Activated naive CD4-positive, alpha-beta T cell treated with anti-CD3 and anti-CD28 coated beads for 36 hours (primary cell): ENCODE measurements at regions of chr20 and their contacts with region 1.

Region 1: GRCh38 chr20:32535953-32536823 is 48.9 kb downstream of the NOL4L start:
- DNase-seq: peak; percentile 88
- H3K4me3 Mint-ChIP-seq: peak overlapping the region; percentile 67
- H3K27ac Mint-ChIP-seq: peak overlapping the region; percentile 91
- H3K4me1 Mint-ChIP-seq: peaks cover 85% of the 10 kb centered on the region
- H3K27me3 Mint-ChIP-seq: no peaks in the 10 kb centered on the region

Region 2: DNA sequence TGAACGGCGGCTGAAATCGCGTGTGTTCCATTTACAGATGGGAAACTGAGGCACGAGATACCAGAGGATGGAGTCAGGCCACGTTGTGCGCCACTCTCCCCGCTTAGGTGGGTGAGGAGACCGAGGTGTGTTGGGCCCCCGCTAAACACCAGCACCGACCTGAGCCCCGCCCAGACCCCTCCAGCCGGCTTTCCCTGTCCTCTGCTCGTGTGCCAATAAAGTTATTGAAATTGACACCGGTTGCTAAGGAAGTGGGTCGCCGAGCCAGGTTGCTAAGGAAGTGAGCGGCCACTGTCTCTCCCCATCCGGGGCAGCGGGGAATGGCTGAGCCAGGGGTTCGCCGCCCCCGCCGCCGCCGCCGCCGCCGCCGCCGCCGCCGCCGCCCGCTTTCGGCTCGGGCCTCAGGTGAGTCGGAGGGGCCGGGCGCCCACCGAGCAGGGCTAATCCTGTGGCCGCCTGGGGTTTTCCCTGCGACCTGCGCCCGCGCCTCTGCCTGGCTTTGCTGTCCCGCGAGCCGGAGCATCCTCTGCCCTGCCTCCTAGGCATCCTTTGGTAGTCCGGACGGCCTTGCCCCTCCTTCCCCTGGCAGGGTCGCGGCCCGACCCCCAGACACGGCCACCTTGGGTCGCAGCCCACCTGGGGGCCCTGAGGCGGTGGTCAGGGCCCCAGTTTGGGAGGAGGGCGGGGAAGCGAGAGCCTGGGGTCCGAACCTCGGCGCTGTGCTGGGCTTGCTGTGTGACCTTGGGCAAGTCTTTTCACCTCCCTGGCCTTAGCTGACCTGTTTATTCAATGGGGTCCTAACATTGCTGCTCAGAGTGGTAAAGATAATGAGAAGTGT is 258.6 kb before region 1 on chr20 and contains the start of gene KIF3B:
- CTCF ChIA-PET with region 1: no interaction called
- intact Hi-C with region 1: loop called (anchors 2 kb)
- DNase-seq: peak; percentile 91
- H3K4me3 Mint-ChIP-seq: peak within 1 kb of the TSS; percentile 89
- H3K27ac Mint-ChIP-seq: peak within 1 kb of the TSS; percentile 89
- H3K4me1 Mint-ChIP-seq: peaks cover 43% of the 10 kb centered on the region
- H3K27me3 Mint-ChIP-seq: no peaks in the 10 kb centered on the region
- total RNA-seq, gene KIF3B: 27.4 to 27.6 TPM

Region 3: GRCh38 chr20:32484958-32485769 is 51.0 kb before region 1 on chr20:
- CTCF ChIA-PET with region 1: no interaction called
- intact Hi-C with region 1: loop called (anchors 2 kb)
- DNase-seq: peak; percentile 95
- H3K4me3 Mint-ChIP-seq: peak overlapping the region; percentile 84
- H3K27ac Mint-ChIP-seq: peak overlapping the region; percentile 93
- H3K4me1 Mint-ChIP-seq: peaks cover 39% of the 10 kb centered on the region
- H3K27me3 Mint-ChIP-seq: no peaks in the 10 kb centered on the region

Region 4: DNA sequence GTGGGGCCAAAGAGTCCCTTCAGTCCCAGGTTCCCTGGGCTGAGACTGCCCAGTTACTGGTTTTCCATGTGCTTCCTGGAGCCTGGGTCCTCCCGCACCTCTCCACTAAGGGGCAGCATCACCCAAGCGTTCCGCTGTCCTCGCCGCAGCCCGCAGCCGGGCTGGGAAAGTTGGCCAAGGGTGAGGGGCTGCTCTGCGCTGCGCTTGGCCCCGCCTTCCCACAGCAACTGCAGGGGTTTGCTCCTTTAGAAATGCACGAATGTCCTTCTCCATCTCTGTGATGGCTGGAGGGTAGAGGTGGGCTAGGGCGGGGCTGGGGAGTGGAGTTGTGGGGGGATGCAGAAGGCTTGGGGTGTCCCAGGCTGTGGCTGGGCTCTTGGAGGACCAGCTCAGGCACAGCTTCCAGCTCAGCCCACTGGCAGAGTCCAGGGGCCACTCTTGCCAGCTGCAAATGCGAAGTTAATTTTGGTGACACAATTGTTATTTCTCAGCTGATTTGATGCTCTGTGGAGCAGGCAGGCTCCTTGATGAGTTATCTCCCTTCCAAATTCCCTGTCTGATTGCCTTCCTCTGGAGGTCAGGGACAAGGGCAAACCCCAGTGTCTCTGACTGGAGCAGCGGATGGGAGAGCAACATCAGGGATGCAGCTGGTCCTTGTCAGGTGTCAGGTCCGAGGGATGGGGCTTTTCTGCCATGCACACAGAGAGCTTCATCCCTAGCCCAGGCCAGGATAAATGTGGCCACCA is 14.2 kb before region 1 on chr20:
- CTCF ChIA-PET with region 1: interaction called, 180 read pairs
- intact Hi-C with region 1: no loop called
- DNase-seq: peak; percentile 81
- H3K4me3 Mint-ChIP-seq: no peak overlapping the region
- H3K27ac Mint-ChIP-seq: peak overlapping the region; percentile 81
- H3K4me1 Mint-ChIP-seq: peaks cover 56% of the 10 kb centered on the region
- H3K27me3 Mint-ChIP-seq: no peaks in the 10 kb centered on the region

Region 5: GRCh38 chr20:32585011-32585518 is 48.9 kb after region 1 on chr20 and contains the start of gene NOL4L:
- CTCF ChIA-PET with region 1: no interaction called
- intact Hi-C with region 1: loop called (anchors 1 kb)
- DNase-seq: peak; percentile 57
- H3K4me3 Mint-ChIP-seq: peak within 1 kb of the TSS; percentile 74
- H3K27ac Mint-ChIP-seq: peak within 1 kb of the TSS; percentile 60
- H3K4me1 Mint-ChIP-seq: peaks cover 33% of the 10 kb centered on the region
- H3K27me3 Mint-ChIP-seq: no peaks in the 10 kb centered on the region
- total RNA-seq, gene NOL4L: 24.8 to 29.2 TPM

Region 6: GRCh38 chr20:32819992-32820710 is 284.0 kb after region 1 on chr20:
- CTCF ChIA-PET with region 1: no interaction called
- intact Hi-C with region 1: loop called (anchors 5 kb)
- DNase-seq: peak; percentile 76
- H3K4me3 Mint-ChIP-seq: peak overlapping the region; percentile 97
- H3K27ac Mint-ChIP-seq: peak overlapping the region; percentile 94
- H3K4me1 Mint-ChIP-seq: peaks cover 35% of the 10 kb centered on the region
- H3K27me3 Mint-ChIP-seq: no peaks in the 10 kb centered on the region